ENCODE measurements at regions of chr7 and their contacts with region 1.

Region 1: DNA sequence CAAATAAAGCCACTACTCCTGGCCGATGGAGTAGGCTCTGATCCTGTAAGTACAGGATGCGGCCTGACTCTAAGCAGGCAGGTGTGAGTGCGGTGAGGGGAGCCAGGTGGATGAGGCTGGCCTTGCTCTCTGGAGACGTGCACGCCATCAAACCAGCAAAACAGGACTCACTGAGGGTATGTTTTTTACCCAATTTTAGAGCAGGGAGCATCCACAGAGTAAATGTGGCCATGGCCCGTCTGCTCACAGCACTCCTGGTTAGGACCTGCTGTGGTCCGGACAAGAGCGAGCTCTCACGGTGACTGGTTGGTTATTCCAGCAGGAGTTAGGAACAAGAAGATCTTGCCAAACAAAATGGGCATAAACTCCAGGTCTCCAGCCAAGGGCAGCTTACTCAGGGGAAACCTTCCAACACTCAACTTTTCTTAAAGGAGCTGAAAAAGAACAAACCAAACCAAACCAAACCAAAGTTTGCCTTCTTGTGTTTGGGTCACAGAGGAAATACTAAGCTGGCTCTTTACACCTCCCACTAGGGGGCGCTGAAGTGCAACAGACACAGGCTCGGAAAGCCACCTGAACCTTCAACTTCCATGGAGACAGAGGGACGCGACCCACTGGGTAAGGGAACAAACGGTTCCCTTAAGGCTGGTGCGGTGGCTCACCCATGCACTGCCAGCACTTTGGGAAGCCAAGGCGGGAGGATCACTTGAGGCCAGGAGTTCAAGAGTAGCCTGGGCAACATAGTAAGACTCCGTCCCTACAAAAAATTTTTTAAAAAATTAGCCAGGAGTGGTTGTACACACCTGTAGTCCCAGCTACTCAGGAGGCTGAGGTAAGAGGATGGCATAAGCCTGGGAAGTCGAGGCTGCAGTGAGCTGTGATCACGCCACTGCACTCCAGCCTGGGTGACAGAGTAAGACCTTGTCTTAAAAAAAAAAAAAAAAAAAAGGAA is 122.4 kb downstream of the CLEC2L start:
- DNase-seq: peak; percentile 87
- H3K4me3 Mint-ChIP-seq: no peak overlapping the region
- H3K27ac Mint-ChIP-seq: no peak overlapping the region
- H3K4me1 Mint-ChIP-seq: peaks cover 49% of the 10 kb centered on the region
- H3K27me3 Mint-ChIP-seq: no peaks in the 10 kb centered on the region

Region 2: GRCh38 chr7:139602143-139602722 is 43.6 kb before region 1 on chr7:
- CTCF ChIA-PET with region 1: interaction called, 27 read pairs
- POLR2A ChIA-PET with region 1: no interaction called
- intact Hi-C with region 1: no loop called
- DNase-seq: no peak
- H3K4me3 Mint-ChIP-seq: no peak overlapping the region
- H3K27ac Mint-ChIP-seq: no peak overlapping the region
- H3K4me1 Mint-ChIP-seq: no peaks in the 10 kb centered on the region
- H3K27me3 Mint-ChIP-seq: no peaks in the 10 kb centered on the region

Region 3: GRCh38 chr7:139660317-139661042 is 14.6 kb after region 1 on chr7:
- CTCF ChIA-PET with region 1: interaction called, 20 read pairs
- POLR2A ChIA-PET with region 1: no interaction called
- intact Hi-C with region 1: no loop called
- DNase-seq: no peak
- H3K4me3 Mint-ChIP-seq: no peak overlapping the region
- H3K27ac Mint-ChIP-seq: no peak overlapping the region
- H3K4me1 Mint-ChIP-seq: peaks cover 9% of the 10 kb centered on the region
- H3K27me3 Mint-ChIP-seq: no peaks in the 10 kb centered on the region

Region 4: DNA sequence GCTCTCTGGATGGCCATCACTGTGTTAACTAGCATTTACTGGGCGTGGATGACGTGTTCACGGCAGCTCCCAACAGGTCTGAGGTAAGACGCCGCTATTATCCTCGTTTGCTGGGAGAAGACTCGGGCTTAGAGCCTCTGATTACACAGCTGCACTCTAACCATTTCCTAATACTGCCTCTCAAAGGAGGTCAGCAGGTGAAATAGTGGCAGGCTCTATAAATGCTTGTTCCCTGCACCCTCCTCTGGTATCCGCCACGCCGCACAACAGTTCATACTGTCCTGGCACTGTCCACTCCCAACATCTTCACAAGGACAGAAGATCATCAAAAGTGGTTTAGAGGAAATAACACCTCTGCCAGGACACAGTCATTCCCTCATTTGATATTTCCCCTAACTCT is 103.7 kb after region 1 on chr7:
- CTCF ChIA-PET with region 1: interaction called, 11 read pairs
- POLR2A ChIA-PET with region 1: no interaction called
- intact Hi-C with region 1: no loop called
- DNase-seq: no peak
- H3K4me3 Mint-ChIP-seq: no peak overlapping the region
- H3K27ac Mint-ChIP-seq: no peak overlapping the region
- H3K4me1 Mint-ChIP-seq: peaks cover 24% of the 10 kb centered on the region
- H3K27me3 Mint-ChIP-seq: no peaks in the 10 kb centered on the region

Region 5: DNA sequence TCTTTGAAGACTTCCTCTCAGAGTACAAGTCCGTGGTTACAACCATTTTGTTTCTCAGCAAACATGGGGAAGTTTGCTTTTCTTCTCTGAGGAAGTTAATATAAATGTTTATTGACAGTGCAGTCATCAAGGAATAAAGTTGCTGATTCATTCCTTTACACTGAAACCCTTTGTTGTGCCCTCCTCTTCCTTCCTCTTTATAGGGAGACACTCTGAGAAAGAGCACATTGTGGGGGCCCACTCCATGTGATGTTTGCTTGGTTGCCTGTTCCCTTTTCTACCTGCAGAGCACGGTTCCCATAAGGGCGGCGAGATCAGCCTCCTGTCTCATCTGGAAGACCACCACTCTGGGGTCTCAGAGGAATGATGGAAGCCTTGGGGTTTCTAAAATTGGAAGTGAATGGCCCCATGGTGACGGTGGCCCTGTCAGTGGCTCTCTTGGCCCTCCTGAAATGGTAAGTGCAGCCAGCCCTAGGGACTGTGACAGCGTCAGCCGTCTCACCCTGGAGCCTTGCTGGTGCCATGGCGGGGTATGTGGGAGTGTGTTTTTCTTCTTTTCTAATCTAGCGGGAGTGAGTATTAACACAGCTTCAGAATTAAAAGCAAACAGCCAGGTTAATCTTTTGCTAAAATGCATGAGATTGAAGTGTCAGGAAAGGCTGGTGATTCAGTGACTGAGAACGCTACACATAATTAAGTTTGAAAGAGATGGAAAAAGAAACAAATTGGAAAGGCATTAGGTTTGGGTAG is 183.4 kb after region 1 on chr7 and contains the start of gene TBXAS1:
- CTCF ChIA-PET with region 1: interaction called, 19 read pairs
- POLR2A ChIA-PET with region 1: no interaction called
- intact Hi-C with region 1: loop called (anchors 1 kb)
- DNase-seq: peak; percentile 36
- H3K4me3 Mint-ChIP-seq: peak within 1 kb of the TSS; percentile 73
- H3K27ac Mint-ChIP-seq: peak within 1 kb of the TSS; percentile 88
- H3K4me1 Mint-ChIP-seq: peaks cover 28% of the 10 kb centered on the region
- H3K27me3 Mint-ChIP-seq: peaks cover 4% of the 10 kb centered on the region
- total RNA-seq, gene TBXAS1: 4.8 to 5.3 TPM

Region 6: GRCh38 chr7:139995017-139995931 is 349.4 kb after region 1 on chr7:
- CTCF ChIA-PET with region 1: interaction called, 200 read pairs
- POLR2A ChIA-PET with region 1: no interaction called
- intact Hi-C with region 1: no loop called
- DNase-seq: no peak
- H3K4me3 Mint-ChIP-seq: no peak overlapping the region
- H3K27ac Mint-ChIP-seq: no peak overlapping the region
- H3K4me1 Mint-ChIP-seq: no peaks in the 10 kb centered on the region
- H3K27me3 Mint-ChIP-seq: no peaks in the 10 kb centered on the region